Endothelial cell of umbilical vein (primary cell): ENCODE measurements at regions of chr1 and their contacts with region 1.

Region 1: DNA sequence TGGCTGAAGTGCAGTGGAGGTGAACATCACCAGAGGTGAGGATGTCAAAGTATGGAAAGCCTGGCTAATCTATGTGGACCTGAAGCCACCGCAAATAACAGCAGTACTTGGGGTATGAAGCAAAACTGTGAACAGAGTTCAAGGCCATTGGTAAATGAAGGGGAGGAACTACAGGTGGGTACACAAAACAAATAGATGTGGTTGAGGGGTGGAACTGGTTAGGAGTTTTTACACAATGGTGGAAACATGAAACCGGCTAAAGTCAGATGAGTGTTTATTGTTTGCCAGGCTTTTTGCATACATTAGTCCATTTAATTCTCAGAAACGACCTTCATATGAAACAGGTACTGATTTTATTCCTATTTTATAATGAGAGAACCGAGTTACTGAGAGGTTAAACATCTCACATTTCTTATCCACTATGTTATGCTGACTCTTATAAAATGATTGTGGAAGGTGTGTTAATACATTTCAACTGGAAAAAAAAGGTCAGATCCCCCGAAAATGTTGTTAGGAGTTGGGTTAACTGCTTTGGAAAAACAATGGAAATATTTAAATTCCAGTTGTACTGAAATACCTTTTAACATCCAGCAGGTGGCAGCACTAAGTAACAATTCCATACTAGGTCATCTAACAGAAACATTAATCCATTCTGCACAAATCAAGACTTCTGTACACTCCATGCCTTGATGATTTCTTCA is 44.3 kb upstream of the GTF2B start:
- DNase-seq: peak; percentile 44
- H3K4me3 ChIP-seq: no peak overlapping the region
- H3K27ac ChIP-seq: no peak overlapping the region
- H3K4me1 ChIP-seq: no peaks in the 10 kb centered on the region
- H3K27me3 ChIP-seq: no peaks in the 10 kb centered on the region
- CTCF ChIP-seq: peak; percentile 38 to 40
- POLR2A ChIP-seq: no peak

Region 2: GRCh38 chr1:88736639-88737248 is 198.9 kb before region 1 on chr1:
- CTCF ChIA-PET with region 1: no interaction called
- POLR2A ChIA-PET with region 1: no interaction called
- dilution Hi-C with region 1: no loop called
- intact Hi-C with region 1: loop called (anchors 5 kb)
- DNase-seq: peak; percentile 31
- H3K4me3 ChIP-seq: no peak overlapping the region
- H3K27ac ChIP-seq: no peak overlapping the region
- H3K4me1 ChIP-seq: peaks cover 5% of the 10 kb centered on the region
- H3K27me3 ChIP-seq: no peaks in the 10 kb centered on the region
- CTCF ChIP-seq: peak; percentile 56 to 69
- POLR2A ChIP-seq: no peak

Region 3: GRCh38 chr1:89358287-89358893 is 422.7 kb after region 1 on chr1:
- CTCF ChIA-PET with region 1: no interaction called
- POLR2A ChIA-PET with region 1: no interaction called
- dilution Hi-C with region 1: no loop called
- intact Hi-C with region 1: loop called (anchors 1 kb)
- DNase-seq: peak; percentile 62
- H3K4me3 ChIP-seq: no peak overlapping the region
- H3K27ac ChIP-seq: no peak overlapping the region
- H3K4me1 ChIP-seq: no peaks in the 10 kb centered on the region
- H3K27me3 ChIP-seq: peaks cover 4 to 10% of the 10 kb centered on the region in 2 experiments
- CTCF ChIP-seq: peak; percentile 63 to 75
- POLR2A ChIP-seq: no peak

Region 4: GRCh38 chr1:89454845-89455521 is 519.3 kb after region 1 on chr1:
- CTCF ChIA-PET with region 1: interaction called, 3 read pairs
- POLR2A ChIA-PET with region 1: no interaction called
- dilution Hi-C with region 1: no loop called
- intact Hi-C with region 1: loop called (anchors 2 kb)
- DNase-seq: peak; percentile 58
- H3K4me3 ChIP-seq: no peak overlapping the region
- H3K27ac ChIP-seq: no peak overlapping the region
- H3K4me1 ChIP-seq: no peaks in the 10 kb centered on the region
- H3K27me3 ChIP-seq: peaks cover 0 to 7% of the 10 kb centered on the region in 2 experiments
- CTCF ChIP-seq: peak; percentile 22 to 39
- POLR2A ChIP-seq: no peak